ENCODE measurements at regions of chr11 and their contacts with region 1.

Region 1: DNA sequence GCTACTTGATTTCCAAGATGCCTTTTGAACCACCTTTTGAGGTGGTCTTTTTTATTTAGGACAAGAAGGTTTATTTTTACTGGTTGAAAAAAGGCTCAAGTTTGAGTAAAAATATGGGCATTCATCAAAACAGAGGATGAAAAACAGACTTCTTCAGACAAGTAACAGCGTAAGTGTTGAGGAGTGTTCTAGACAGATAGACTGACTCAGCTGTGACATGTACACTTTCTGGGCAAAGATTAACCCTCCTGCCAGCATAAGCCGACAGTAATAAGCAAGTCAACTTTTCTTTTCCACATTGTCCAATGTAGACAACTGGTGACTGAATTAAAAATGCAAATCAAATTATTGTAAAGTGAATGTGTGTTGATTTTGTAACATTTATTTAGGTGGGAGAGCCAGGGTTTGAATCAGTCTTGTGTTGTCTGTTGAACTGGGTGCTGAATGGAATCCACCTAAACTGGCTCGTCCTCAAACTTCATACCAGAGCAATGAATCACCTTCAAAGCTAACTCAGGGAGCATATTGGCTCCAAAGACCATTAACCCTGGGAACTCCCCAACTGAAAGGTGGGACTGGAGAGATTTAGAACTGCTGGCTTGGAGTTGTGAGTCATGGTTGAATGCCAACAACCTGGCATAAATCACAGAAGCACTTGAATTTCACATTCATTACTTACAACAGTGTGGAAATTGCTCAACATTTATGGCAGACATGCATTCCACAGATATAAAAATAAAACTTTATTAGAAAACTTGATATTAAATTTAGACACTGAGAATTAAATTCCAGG is 377.0 kb downstream of the ETS1 start:
- DNase-seq: peak; percentile 98
- H3K4me3 ChIP-seq: peak overlapping the region in 1 of 3 experiments; percentile 44
- H3K27ac ChIP-seq: peak overlapping the region; percentile 97
- H3K4me1 ChIP-seq: peaks cover 49% of the 10 kb centered on the region
- H3K27me3 ChIP-seq: no peaks in the 10 kb centered on the region
- CTCF ChIP-seq: no peak
- POLR2A ChIP-seq: no peak

Region 2: GRCh38 chr11:128026596-128026995 is 183.7 kb before region 1 on chr11:
- CTCF ChIA-PET with region 1: no interaction called
- POLR2A ChIA-PET with region 1: no interaction called
- dilution Hi-C with region 1: no loop called
- intact Hi-C with region 1: loop called (anchors 1 kb)
- DNase-seq: peak; percentile 81
- H3K4me3 ChIP-seq: no peak overlapping the region
- H3K27ac ChIP-seq: peak overlapping the region; percentile 39
- H3K4me1 ChIP-seq: peaks cover 25% of the 10 kb centered on the region
- H3K27me3 ChIP-seq: no peaks in the 10 kb centered on the region
- CTCF ChIP-seq: no peak
- POLR2A ChIP-seq: no peak

Region 3: GRCh38 chr11:128180446-128181087 is 29.8 kb before region 1 on chr11:
- CTCF ChIA-PET with region 1: no interaction called
- POLR2A ChIA-PET with region 1: no interaction called
- dilution Hi-C with region 1: no loop called
- intact Hi-C with region 1: loop called (anchors 1 kb)
- DNase-seq: peak; percentile 93
- H3K4me3 ChIP-seq: no peak overlapping the region
- H3K27ac ChIP-seq: peak overlapping the region; percentile 97
- H3K4me1 ChIP-seq: peaks cover 19% of the 10 kb centered on the region
- H3K27me3 ChIP-seq: no peaks in the 10 kb centered on the region
- CTCF ChIP-seq: no peak
- POLR2A ChIP-seq: no peak

Region 4: DNA sequence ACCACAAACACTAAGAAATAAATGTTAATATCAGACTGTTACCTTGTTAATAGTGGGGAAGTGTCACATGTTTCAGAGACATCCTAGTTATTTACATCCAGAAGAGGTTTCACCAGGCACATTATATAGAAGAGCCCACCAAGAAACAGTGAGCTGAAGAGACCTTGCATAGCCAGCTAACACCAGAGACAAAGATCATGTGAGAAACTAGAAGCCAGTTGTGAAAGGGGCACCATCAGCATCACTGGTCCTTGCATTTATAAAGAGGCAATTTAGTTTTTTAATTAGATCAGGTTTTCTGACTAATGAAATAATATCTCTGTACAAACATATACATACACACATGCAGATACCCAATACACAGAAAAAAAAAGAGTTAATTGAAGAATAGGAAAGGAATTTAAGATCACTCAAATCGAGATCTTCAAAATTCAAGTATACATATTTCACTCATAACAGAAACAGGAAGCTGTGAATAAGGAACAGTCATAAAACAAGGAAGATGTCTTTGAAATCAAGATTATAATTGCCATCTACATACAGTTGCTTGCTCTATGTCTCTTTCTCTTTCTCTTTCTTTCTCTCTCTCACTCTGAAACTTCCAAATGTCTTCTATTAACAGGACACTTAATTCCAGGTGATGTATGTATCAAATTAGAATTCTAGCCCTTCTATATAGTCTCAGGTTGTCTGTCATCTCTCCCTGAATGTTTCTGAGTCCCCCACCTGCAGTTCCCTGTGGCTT is 28.3 kb after region 1 on chr11:
- CTCF ChIA-PET with region 1: interaction called, 6 read pairs
- POLR2A ChIA-PET with region 1: no interaction called
- dilution Hi-C with region 1: no loop called
- intact Hi-C with region 1: loop called (anchors 1 kb)
- DNase-seq: peak; percentile 33
- H3K4me3 ChIP-seq: no peak overlapping the region
- H3K27ac ChIP-seq: peak overlapping the region; percentile 60
- H3K4me1 ChIP-seq: peaks cover 34% of the 10 kb centered on the region
- H3K27me3 ChIP-seq: no peaks in the 10 kb centered on the region
- CTCF ChIP-seq: no peak
- POLR2A ChIP-seq: no peak

Region 5: GRCh38 chr11:128328955-128329551 is 118.7 kb after region 1 on chr11:
- CTCF ChIA-PET with region 1: no interaction called
- POLR2A ChIA-PET with region 1: no interaction called
- dilution Hi-C with region 1: no loop called
- intact Hi-C with region 1: loop called (anchors 1 kb)
- DNase-seq: peak; percentile 93
- H3K4me3 ChIP-seq: no peak overlapping the region
- H3K27ac ChIP-seq: peak overlapping the region; percentile 57
- H3K4me1 ChIP-seq: peaks cover 32% of the 10 kb centered on the region
- H3K27me3 ChIP-seq: no peaks in the 10 kb centered on the region
- CTCF ChIP-seq: no peak
- POLR2A ChIP-seq: peak; percentile 26

Region 6: DNA sequence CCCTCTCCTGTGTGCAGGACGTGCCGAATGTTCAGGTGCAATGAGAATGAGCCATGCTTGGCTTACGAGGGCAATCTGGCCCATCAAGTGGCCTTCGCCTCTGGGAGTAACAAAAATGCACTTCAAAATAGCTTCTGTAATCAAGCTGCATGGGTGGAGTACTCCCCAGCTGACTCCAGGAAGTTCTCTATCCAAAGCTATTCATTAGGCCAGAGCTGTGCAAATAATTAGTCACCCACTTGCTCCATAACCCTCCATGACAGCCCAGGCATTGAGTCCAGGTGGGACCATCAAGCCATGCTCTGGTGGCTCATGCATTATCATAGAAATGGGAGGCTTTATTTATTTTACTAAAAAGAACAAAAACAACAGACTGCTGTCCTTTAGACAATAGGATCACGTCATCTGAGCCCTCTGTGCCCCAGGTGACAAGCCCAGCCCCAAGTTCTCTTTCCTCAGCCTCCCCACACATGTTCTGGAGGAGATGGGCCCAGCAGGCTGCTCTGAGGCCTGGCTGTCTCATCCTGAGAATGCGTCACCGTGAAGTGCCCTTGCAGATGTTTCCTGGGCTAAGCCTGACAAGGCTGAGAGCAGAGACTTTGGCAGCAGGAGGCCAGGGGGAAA is 132.3 kb after region 1 on chr11:
- CTCF ChIA-PET with region 1: no interaction called
- POLR2A ChIA-PET with region 1: no interaction called
- dilution Hi-C with region 1: no loop called
- intact Hi-C with region 1: loop called (anchors 1 kb)
- DNase-seq: peak; percentile 98
- H3K4me3 ChIP-seq: no peak overlapping the region
- H3K27ac ChIP-seq: peak overlapping the region; percentile 83
- H3K4me1 ChIP-seq: peaks cover 31% of the 10 kb centered on the region
- H3K27me3 ChIP-seq: no peaks in the 10 kb centered on the region
- CTCF ChIP-seq: no peak
- POLR2A ChIP-seq: peak; percentile 47

Region 7: GRCh38 chr11:128552783-128553661 is 342.7 kb after region 1 on chr11:
- CTCF ChIA-PET with region 1: no interaction called
- POLR2A ChIA-PET with region 1: no interaction called
- dilution Hi-C with region 1: no loop called
- intact Hi-C with region 1: loop called (anchors 1 kb)
- DNase-seq: no peak
- H3K4me3 ChIP-seq: no peak overlapping the region
- H3K27ac ChIP-seq: no peak overlapping the region
- H3K4me1 ChIP-seq: peaks cover 11% of the 10 kb centered on the region
- H3K27me3 ChIP-seq: peaks cover 4 to 6% of the 10 kb centered on the region in 2 experiments
- CTCF ChIP-seq: no peak
- POLR2A ChIP-seq: no peak